MCF 10A (cell line): ENCODE measurements at regions of chr6 and their contacts with region 1.

Region 1: GRCh38 chr6:1088492-1089001 is 223.4 kb upstream of the FOXQ1 start:
- DNase-seq: peak; percentile 14
- H3K4me3 Mint-ChIP-seq: no peak overlapping the region
- H3K27ac Mint-ChIP-seq: peak overlapping the region; percentile 0
- H3K4me1 Mint-ChIP-seq: peaks cover 17% of the 10 kb centered on the region
- H3K27me3 Mint-ChIP-seq: no peaks in the 10 kb centered on the region
- CTCF ChIP-seq: no peak

Region 2: GRCh38 chr6:1103945-1104623 is 15.5 kb after region 1 on chr6:
- CTCF ChIA-PET with region 1: interaction called, 3 read pairs
- POLR2A ChIA-PET with region 1: interaction called, 64 read pairs
- intact Hi-C with region 1: no loop called
- DNase-seq: no peak
- H3K4me3 Mint-ChIP-seq: no peak overlapping the region
- H3K27ac Mint-ChIP-seq: no peak overlapping the region
- H3K4me1 Mint-ChIP-seq: peaks cover 23% of the 10 kb centered on the region
- H3K27me3 Mint-ChIP-seq: no peaks in the 10 kb centered on the region
- CTCF ChIP-seq: no peak

Region 3: DNA sequence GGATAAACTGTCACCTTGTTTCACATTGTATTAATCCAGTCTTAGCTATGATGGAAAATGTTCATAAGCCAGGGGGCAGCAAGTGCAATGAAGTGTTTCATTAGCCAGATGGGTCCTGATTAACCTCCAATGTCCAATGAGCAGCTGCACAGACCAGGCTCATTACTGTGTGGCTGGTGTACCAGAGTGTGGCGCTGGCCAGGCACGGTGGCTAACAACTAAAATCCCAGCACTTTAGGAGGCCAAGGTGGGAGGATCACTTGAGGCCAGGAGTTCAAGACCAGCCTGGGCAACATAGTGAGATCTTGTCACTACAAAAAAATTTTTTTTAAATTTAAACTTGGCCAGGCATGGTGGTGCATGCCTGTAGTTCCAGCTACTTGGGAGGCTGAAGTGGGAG is 21.6 kb after region 1 on chr6:
- CTCF ChIA-PET with region 1: interaction called, 4 read pairs
- POLR2A ChIA-PET with region 1: interaction called, 64 read pairs
- intact Hi-C with region 1: no loop called
- DNase-seq: no peak
- H3K4me3 Mint-ChIP-seq: no peak overlapping the region
- H3K27ac Mint-ChIP-seq: peak overlapping the region; percentile 99
- H3K4me1 Mint-ChIP-seq: peaks cover 29% of the 10 kb centered on the region
- H3K27me3 Mint-ChIP-seq: no peaks in the 10 kb centered on the region
- CTCF ChIP-seq: no peak

Region 4: GRCh38 chr6:1136415-1136774 is 47.8 kb after region 1 on chr6:
- CTCF ChIA-PET with region 1: interaction called, 4 read pairs
- POLR2A ChIA-PET with region 1: interaction called, 26 read pairs
- intact Hi-C with region 1: loop called (anchors 5 kb)
- DNase-seq: peak; percentile 82
- H3K4me3 Mint-ChIP-seq: peak overlapping the region; percentile 52
- H3K27ac Mint-ChIP-seq: peak overlapping the region; percentile 74
- H3K4me1 Mint-ChIP-seq: peaks cover 26% of the 10 kb centered on the region
- H3K27me3 Mint-ChIP-seq: no peaks in the 10 kb centered on the region
- CTCF ChIP-seq: no peak

Region 5: DNA sequence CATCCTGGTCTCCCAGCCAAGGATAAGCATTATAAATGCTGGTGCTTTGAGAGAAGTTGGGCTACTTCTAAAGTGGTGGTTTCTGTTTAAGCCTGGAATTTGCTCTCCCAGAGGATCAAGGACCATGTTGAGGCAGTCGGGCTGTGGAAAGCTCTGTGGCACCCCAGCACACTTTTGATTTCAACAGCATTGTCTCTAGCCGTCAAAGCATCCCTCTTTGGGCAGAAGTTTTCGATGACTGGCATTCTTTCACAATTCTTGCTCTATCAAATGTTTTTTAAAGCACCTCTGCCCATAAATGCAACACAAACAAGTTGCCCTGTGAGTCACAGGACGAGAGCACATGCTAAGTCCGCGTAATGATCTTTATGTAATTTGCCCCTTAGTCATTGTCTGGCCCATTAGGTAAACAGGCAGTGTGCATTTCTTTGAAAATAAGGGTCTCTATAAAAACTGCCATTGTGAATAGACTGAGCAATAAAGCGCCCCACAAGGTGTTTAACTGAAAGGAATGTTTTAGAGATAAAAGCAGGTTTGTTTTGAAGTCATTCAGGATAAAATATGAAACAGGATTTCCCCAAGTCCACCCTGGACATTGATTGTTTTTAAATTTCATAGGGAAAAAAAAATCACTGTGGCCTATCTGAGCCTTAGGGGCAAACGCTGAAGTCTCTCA is 178.6 kb after region 1 on chr6:
- CTCF ChIA-PET with region 1: no interaction called
- POLR2A ChIA-PET with region 1: interaction called, 12 read pairs
- intact Hi-C with region 1: no loop called
- DNase-seq: peak; percentile 94
- H3K4me3 Mint-ChIP-seq: peak overlapping the region; percentile 40
- H3K27ac Mint-ChIP-seq: peak overlapping the region; percentile 71
- H3K4me1 Mint-ChIP-seq: peaks cover 15% of the 10 kb centered on the region
- H3K27me3 Mint-ChIP-seq: no peaks in the 10 kb centered on the region
- CTCF ChIP-seq: no peak

Region 6: GRCh38 chr6:1286972-1287610 is 198.5 kb after region 1 on chr6:
- CTCF ChIA-PET with region 1: no interaction called
- POLR2A ChIA-PET with region 1: interaction called, 11 read pairs
- intact Hi-C with region 1: no loop called
- DNase-seq: peak; percentile 99
- H3K4me3 Mint-ChIP-seq: peak overlapping the region; percentile 66
- H3K27ac Mint-ChIP-seq: peak overlapping the region; percentile 98
- H3K4me1 Mint-ChIP-seq: peaks cover 26% of the 10 kb centered on the region
- H3K27me3 Mint-ChIP-seq: no peaks in the 10 kb centered on the region
- CTCF ChIP-seq: no peak